Head of caudate nucleus (tissue), 42 donors: ENCODE measurements at regions of chr18 and their contacts with region 1.

Region 1: DNA sequence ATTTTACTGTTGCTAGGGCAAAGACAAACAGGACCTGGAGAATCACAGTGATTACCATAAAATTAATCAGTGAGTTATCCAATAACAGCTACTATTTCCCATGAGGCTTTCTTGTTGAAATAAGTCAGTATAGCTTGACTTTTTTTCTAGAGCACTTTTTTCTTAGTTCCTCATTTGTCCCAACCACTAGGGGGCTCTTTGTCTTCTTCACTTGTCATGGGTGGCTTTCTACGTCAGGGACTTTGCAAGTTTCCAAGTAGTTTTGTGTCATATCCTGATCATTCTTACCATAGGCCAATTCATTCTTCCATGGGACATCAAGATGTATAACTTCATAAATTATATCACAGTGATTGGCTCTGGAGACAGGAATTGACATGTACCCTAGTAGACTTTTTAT is 1019.6 kb upstream of the PIK3C3 start:
- DNase-seq: no peak

Region 2: DNA sequence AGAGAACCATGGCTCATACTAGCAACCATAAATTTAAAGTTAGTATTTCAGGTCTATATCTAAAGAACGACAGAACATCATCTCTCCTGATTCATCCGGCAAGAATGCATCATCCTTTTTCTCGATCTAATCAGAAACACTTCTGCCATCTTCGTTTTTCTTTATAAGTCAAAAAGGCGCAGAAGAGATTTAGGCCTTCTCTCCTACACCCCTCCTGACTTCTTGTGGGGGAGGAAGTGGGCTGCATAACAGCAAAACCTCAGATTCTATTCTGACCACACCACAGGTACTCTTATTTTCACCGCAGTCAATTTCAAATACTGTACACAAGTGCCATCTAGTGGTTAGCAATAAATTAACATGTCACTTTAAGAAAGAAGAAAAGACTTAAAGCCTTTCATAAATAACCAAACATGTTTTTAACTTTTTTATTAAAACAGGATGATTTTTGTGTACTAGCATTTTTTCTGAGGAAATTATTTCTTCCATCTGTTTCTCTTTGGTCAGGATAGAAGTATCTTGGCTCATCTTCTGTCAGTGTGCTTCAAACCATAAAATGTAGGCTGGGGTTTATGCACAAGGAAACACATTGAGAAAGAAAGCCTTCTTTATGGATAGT is 971.2 kb after region 1 on chr18:
- intact Hi-C with region 1: loop called (anchors 10 kb)
- DNase-seq: peak in 1 of 42 donors; percentile 3